ENCODE measurements at regions of chr6 and their contacts with region 1.

Region 1: DNA sequence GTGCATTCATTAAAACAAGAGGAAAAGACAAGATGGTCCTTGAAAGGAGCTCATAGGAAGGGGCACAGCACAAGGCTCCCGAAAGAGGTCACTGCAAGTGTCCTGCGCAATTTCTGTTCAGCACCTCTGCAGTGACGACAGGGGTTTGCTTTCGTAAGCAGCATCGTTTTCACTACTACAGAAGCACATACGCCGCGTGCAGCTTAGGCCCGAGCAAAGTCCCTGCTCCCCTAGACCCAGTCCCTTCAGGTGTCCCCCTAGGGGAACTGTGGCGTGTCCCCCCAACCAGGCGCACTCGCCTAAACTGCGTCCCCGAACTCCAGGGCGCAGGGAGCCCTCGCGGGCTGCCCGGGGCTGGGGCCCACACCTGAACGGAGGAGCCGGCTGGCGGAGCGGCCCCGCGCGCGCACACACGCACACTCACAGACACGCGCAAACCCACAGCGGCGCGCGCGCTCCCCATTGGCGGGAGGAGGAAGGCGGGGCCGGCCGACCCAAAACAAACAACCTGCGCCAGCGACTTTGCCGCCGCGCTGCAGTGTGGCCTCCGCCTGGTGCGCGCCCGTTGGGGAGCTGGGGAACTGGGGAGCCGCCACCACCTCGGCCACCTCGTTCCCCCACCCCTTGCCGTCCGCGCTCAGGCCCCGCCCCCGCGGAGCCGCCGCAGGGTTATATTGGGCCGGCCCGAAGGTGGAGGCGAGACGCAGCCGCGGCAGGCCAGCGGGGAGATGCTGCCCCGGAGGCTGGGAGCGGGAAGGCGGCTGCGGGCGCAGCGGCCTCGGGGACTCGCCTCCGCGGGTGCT is at the start of gene FOXQ1:
- DNase-seq: peak; percentile 26
- ATAC-seq: no peak
- H3K4me3 Mint-ChIP-seq: peak within 1 kb of the TSS; percentile 38
- H3K27ac Mint-ChIP-seq: no peak within 1 kb of the TSS
- H3K4me1 Mint-ChIP-seq: peaks cover 15% of the 10 kb centered on the region
- H3K27me3 Mint-ChIP-seq: peaks cover 66% of the 10 kb centered on the region
- CTCF ChIP-seq: no peak
- total RNA-seq, gene FOXQ1: not detected

Region 2: GRCh38 chr6:1179571-1180459 is 131.8 kb before region 1 on chr6:
- CTCF ChIA-PET with region 1: no interaction called
- POLR2A ChIA-PET with region 1: no interaction called
- intact Hi-C with region 1: no loop called
- DNase-seq: no peak
- ATAC-seq: no peak
- H3K4me3 Mint-ChIP-seq: no peak overlapping the region
- H3K27ac Mint-ChIP-seq: no peak overlapping the region
- H3K4me1 Mint-ChIP-seq: no peaks in the 10 kb centered on the region
- H3K27me3 Mint-ChIP-seq: peaks cover 10% of the 10 kb centered on the region
- CTCF ChIP-seq: no peak

Region 3: DNA sequence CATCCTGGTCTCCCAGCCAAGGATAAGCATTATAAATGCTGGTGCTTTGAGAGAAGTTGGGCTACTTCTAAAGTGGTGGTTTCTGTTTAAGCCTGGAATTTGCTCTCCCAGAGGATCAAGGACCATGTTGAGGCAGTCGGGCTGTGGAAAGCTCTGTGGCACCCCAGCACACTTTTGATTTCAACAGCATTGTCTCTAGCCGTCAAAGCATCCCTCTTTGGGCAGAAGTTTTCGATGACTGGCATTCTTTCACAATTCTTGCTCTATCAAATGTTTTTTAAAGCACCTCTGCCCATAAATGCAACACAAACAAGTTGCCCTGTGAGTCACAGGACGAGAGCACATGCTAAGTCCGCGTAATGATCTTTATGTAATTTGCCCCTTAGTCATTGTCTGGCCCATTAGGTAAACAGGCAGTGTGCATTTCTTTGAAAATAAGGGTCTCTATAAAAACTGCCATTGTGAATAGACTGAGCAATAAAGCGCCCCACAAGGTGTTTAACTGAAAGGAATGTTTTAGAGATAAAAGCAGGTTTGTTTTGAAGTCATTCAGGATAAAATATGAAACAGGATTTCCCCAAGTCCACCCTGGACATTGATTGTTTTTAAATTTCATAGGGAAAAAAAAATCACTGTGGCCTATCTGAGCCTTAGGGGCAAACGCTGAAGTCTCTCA is 44.4 kb before region 1 on chr6:
- CTCF ChIA-PET with region 1: no interaction called
- POLR2A ChIA-PET with region 1: no interaction called
- intact Hi-C with region 1: no loop called
- DNase-seq: no peak
- ATAC-seq: no peak
- H3K4me3 Mint-ChIP-seq: no peak overlapping the region
- H3K27ac Mint-ChIP-seq: no peak overlapping the region
- H3K4me1 Mint-ChIP-seq: no peaks in the 10 kb centered on the region
- H3K27me3 Mint-ChIP-seq: peaks cover 8% of the 10 kb centered on the region
- CTCF ChIP-seq: no peak

Region 4: GRCh38 chr6:1381481-1382330 is 70.1 kb after region 1 on chr6:
- CTCF ChIA-PET with region 1: interaction called, 8 read pairs
- POLR2A ChIA-PET with region 1: interaction called, 3 read pairs
- intact Hi-C with region 1: loop called (anchors 5 kb)
- DNase-seq: peak; percentile 55
- ATAC-seq: peak; percentile 76
- H3K4me3 Mint-ChIP-seq: no peak overlapping the region
- H3K27ac Mint-ChIP-seq: no peak overlapping the region
- H3K4me1 Mint-ChIP-seq: peaks cover 28% of the 10 kb centered on the region
- H3K27me3 Mint-ChIP-seq: peaks cover 69% of the 10 kb centered on the region
- CTCF ChIP-seq: peak; percentile 95

Measured in activated CD8-positive, alpha-beta T cell treated with anti-CD3 and anti-CD28 coated beads for 36 hours (primary cell).